ENCODE measurements at regions of chr6 and their contacts with region 1.

Region 1: GRCh38 chr6:26223650-26224546 is 136.7 kb downstream of the HFE start:
- DNase-seq: peak; percentile 36
- H3K4me3 ChIP-seq: peak overlapping the region; percentile 72 to 80
- H3K27ac ChIP-seq: peak overlapping the region; percentile 99 to 100
- H3K4me1 ChIP-seq: peaks cover 8 to 18% of the 10 kb centered on the region in 2 experiments; a peak in 3 of 4 replicates
- H3K27me3 ChIP-seq: no peaks in the 10 kb centered on the region
- CTCF ChIP-seq: no peak; the same call in 1 of the 2 replicates
- EP300 ChIP-seq: 0 out of 4 replicates have a peak, but pooled peaks of 1 of the 2 experiments have one; percentile 3
- RAD21 ChIP-seq: no peak

Region 2: GRCh38 chr6:26183581-26184366 is 40.1 kb before region 1 on chr6:
- CTCF ChIA-PET with region 1: no interaction called
- POLR2A ChIA-PET with region 1: interaction called, 11 read pairs
- DNase-seq: peak; percentile 71
- H3K4me3 ChIP-seq: peak overlapping the region; percentile 49 to 56
- H3K27ac ChIP-seq: peak overlapping the region; percentile 62 to 97
- H3K4me1 ChIP-seq: peaks cover 4 to 6% of the 10 kb centered on the region in 2 experiments; a peak in 2 of 4 replicates
- H3K27me3 ChIP-seq: no peaks in the 10 kb centered on the region
- CTCF ChIP-seq: no peak
- EP300 ChIP-seq: peak in 1 of 2 experiments; percentile 39; a peak in 1 of 4 replicates
- RAD21 ChIP-seq: no peak

Region 3: GRCh38 chr6:26204332-26205165 is 19.3 kb before region 1 on chr6:
- CTCF ChIA-PET with region 1: no interaction called
- POLR2A ChIA-PET with region 1: interaction called, 32 read pairs
- DNase-seq: peak; percentile 83
- H3K4me3 ChIP-seq: peak overlapping the region; percentile 69 to 95
- H3K27ac ChIP-seq: peak overlapping the region; percentile 97 to 99
- H3K4me1 ChIP-seq: peaks cover 4 to 13% of the 10 kb centered on the region in 2 experiments; a peak in 3 of 4 replicates
- H3K27me3 ChIP-seq: no peaks in the 10 kb centered on the region
- CTCF ChIP-seq: peak; percentile 49
- EP300 ChIP-seq: peak; percentile 88 to 97
- RAD21 ChIP-seq: no peak

Region 4: GRCh38 chr6:26234421-26235296 is 10.8 kb after region 1 on chr6:
- CTCF ChIA-PET with region 1: interaction called, 27 read pairs
- POLR2A ChIA-PET with region 1: interaction called, 96 read pairs
- DNase-seq: peak; percentile 73
- H3K4me3 ChIP-seq: peak overlapping the region; percentile 61 to 72
- H3K27ac ChIP-seq: peak overlapping the region; percentile 77 to 85
- H3K4me1 ChIP-seq: peaks cover 0 to 3% of the 10 kb centered on the region in 2 experiments; a peak in 3 of 4 replicates
- H3K27me3 ChIP-seq: no peaks in the 10 kb centered on the region
- CTCF ChIP-seq: no peak
- EP300 ChIP-seq: peak in 1 of 2 experiments; percentile 52; a peak in 1 of 4 replicates
- RAD21 ChIP-seq: no peak

Region 5: GRCh38 chr6:26249957-26250697 is 26.2 kb after region 1 on chr6:
- CTCF ChIA-PET with region 1: interaction called, 11 read pairs
- POLR2A ChIA-PET with region 1: interaction called, 5 read pairs
- DNase-seq: peak; percentile 58
- H3K4me3 ChIP-seq: peak overlapping the region; percentile 88 to 92
- H3K27ac ChIP-seq: peak overlapping the region; percentile 85 to 97
- H3K4me1 ChIP-seq: peaks cover 0 to 7% of the 10 kb centered on the region in 2 experiments; a peak in 3 of 4 replicates
- H3K27me3 ChIP-seq: no peaks in the 10 kb centered on the region
- CTCF ChIP-seq: peak; percentile 54
- EP300 ChIP-seq: 0 out of 4 replicates have a peak, but pooled peaks of 1 of the 2 experiments have one; percentile 12
- RAD21 ChIP-seq: no peak; the same call in 1 of the 2 replicates

Region 6: DNA sequence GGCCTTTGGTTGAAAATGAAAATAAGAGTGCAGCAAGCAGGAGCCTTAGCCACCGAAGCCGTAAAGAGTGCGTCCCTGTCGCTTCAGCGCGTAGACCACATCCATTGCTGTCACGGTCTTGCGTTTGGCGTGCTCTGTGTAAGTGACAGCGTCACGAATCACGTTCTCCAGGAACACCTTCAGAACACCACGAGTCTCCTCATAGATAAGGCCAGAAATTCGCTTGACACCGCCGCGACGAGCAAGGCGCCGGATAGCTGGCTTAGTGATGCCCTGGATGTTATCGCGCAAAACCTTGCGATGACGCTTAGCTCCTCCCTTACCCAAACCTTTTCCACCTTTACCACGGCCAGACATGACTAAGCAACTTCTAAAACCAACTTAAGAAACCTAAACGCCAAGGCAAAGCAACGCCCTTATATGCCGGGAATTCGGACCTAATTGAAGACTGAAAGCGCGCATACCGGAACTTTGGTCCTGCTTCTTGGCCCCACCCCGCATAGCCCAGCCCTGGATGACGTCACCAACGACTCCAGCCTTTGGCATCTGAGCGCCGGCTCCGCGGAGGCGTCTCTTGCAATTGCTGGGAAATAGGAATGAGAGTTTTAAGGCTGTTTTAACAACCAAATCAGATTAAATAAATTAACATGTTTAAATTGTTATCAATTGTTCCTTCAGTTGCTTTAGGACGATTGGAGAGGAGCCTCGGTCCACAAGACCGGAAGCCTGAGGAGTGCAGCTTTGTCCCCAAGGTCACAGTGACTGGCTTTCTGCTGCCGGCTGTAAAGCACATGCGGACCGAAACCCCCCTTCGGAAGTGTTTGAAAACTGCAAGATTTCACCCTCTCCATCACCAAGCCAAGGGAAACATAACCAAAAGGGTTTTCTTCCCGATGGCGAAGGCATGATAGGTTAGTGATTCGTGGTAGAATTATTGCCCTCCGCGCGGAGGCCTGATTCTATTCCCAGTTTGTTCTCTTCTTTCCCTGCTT is 61.5 kb after region 1 on chr6:
- CTCF ChIA-PET with region 1: interaction called, 3 read pairs
- POLR2A ChIA-PET with region 1: interaction called, 17 read pairs
- DNase-seq: peak; percentile 80
- H3K4me3 ChIP-seq: peak overlapping the region; percentile 78 to 89
- H3K27ac ChIP-seq: peak overlapping the region; percentile 95 to 98
- H3K4me1 ChIP-seq: no peaks in the 10 kb centered on the region; a peak in 2 of 4 replicates
- H3K27me3 ChIP-seq: no peaks in the 10 kb centered on the region
- CTCF ChIP-seq: no peak
- EP300 ChIP-seq: peak; percentile 84 to 99
- RAD21 ChIP-seq: 0 out of 2 replicates have a peak, but pooled peaks have one; percentile 4

Region 7: DNA sequence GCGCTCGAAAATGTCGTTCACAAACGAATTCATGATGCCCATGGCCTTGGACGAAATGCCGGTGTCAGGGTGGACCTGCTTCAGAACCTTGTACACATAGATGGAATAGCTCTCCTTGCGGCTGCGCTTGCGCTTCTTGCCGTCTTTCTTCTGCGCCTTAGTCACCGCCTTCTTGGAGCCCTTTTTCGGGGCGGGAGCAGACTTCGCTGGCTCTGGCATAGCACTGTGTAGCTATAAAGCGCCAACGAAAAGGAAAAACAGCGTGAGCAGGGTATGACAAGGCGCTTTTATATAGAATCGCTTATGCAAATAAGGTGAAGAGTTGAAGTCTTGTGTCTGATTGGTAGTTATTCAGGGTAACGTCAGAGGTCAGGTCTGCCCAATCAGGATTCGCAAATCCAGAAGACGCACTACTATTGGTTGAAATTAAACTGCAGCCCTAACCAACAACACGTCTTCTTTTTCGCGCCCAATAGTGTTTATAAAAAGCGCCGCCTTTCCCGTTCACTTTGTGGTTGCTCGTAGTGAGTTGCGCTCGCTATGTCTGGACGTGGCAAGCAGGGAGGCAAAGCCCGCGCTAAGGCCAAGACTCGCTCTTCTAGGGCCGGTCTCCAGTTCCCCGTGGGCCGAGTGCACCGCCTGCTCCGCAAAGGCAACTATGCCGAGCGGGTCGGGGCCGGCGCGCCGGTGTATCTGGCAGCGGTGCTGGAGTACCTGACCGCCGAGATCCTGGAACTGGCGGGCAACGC is 908.8 kb after region 1 on chr6:
- CTCF ChIA-PET with region 1: no interaction called
- POLR2A ChIA-PET with region 1: interaction called, 11 read pairs
- DNase-seq: peak; percentile 93
- H3K4me3 ChIP-seq: peak overlapping the region; percentile 72 to 73
- H3K27ac ChIP-seq: peak overlapping the region; percentile 91 to 97
- H3K4me1 ChIP-seq: peaks cover 4 to 6% of the 10 kb centered on the region in 2 experiments; a peak in 3 of 4 replicates
- H3K27me3 ChIP-seq: no peaks in the 10 kb centered on the region
- CTCF ChIP-seq: no peak
- EP300 ChIP-seq: peak in 1 of 2 experiments; percentile 43; a peak in 1 of 4 replicates
- RAD21 ChIP-seq: no peak

Measured in SK-N-SH (cell line).